ENCODE measurements at regions of chr2 and their contacts with region 1.

Region 1: DNA sequence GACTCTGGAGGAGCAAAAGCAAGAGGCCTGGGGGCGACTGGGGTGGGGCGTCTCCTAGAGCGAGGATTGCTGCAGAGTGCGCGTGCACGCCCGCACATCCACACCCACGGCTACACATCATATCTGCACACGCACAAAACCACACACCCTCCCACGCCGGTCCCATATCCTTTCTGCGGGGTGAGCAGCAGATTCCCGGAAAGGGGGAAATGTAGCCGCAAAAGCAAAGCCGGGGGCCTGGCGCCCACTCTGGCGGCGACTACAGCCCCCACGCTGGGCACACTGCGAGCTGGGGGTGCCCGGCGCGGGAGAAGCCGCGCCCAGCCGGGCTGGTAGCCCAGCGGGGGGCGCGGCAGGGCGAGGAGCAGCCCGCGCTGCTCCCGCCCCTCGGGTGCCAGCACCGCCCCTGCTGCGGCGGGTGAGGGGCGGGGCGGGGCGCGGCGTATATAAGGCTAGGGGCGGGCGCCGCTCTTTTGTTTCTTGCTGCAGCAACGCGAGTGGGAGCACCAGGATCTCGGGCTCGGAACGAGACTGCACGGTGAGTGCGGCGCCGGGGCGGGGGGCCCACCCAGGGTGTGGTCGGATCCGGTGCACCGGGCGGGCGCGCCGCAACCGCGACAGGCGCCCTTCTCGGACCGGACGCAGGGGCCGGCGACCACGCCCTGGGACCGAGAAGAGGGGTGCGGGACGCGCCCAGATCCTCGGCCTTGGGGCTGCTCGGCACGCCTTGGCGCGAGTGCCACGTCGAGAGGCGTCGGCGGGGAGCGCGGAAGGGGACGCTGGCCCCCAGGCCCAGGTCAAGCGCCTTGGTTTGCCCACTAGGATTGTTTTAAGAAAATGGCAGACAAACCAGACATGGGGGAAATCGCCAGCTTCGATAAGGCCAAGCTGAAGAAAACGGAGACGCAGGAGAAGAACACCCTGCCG is at the start of gene TMSB10:
- DNase-seq: peak; percentile 77 to 93 (median 88)
- ATAC-seq: peak; percentile 71 to 82 (median 72)
- H3K4me3 ChIP-seq: peak within 1 kb of the TSS; percentile 88 to 96
- H3K4me3 Mint-ChIP-seq: peak within 1 kb of the TSS; percentile 94 to 96 (median 96)
- H3K27ac ChIP-seq: peak within 1 kb of the TSS; percentile 76
- H3K27ac Mint-ChIP-seq: peak within 1 kb of the TSS; percentile 94 to 95
- H3K4me1 ChIP-seq: peaks cover 26 to 38% of the 10 kb centered on the region in 2 experiments
- H3K4me1 Mint-ChIP-seq: peaks cover 52 to 62% (median 53%) of the 10 kb centered on the region in 3 donors
- H3K27me3 ChIP-seq: no peaks in the 10 kb centered on the region
- H3K27me3 Mint-ChIP-seq: no peaks in the 10 kb centered on the region
- total RNA-seq, gene TMSB10: 1,423 to 1,890 (median 1,689) TPM

Region 2: GRCh38 chr2:84741296-84741765 is 164.1 kb before region 1 on chr2:
- CTCF ChIA-PET with region 1: no interaction called
- POLR2A ChIA-PET with region 1: interaction called in 1 of 2 experiments, 10 read pairs
- DNase-seq: peak; percentile 6 to 69 (median 37)
- ATAC-seq: peak; percentile 92 to 98 (median 96)
- H3K4me3 ChIP-seq: no peak overlapping the region
- H3K4me3 Mint-ChIP-seq: peak overlapping the region in 1 of 3 donors; percentile 20
- H3K27ac ChIP-seq: peak overlapping the region; percentile 51
- H3K27ac Mint-ChIP-seq: peak overlapping the region; percentile 38 to 77
- H3K4me1 ChIP-seq: peaks cover 7 to 19% of the 10 kb centered on the region in 2 experiments
- H3K4me1 Mint-ChIP-seq: peaks cover 22 to 56% (median 32%) of the 10 kb centered on the region in 3 donors
- H3K27me3 ChIP-seq: no peaks in the 10 kb centered on the region
- H3K27me3 Mint-ChIP-seq: no peaks in the 10 kb centered on the region

Region 3: DNA sequence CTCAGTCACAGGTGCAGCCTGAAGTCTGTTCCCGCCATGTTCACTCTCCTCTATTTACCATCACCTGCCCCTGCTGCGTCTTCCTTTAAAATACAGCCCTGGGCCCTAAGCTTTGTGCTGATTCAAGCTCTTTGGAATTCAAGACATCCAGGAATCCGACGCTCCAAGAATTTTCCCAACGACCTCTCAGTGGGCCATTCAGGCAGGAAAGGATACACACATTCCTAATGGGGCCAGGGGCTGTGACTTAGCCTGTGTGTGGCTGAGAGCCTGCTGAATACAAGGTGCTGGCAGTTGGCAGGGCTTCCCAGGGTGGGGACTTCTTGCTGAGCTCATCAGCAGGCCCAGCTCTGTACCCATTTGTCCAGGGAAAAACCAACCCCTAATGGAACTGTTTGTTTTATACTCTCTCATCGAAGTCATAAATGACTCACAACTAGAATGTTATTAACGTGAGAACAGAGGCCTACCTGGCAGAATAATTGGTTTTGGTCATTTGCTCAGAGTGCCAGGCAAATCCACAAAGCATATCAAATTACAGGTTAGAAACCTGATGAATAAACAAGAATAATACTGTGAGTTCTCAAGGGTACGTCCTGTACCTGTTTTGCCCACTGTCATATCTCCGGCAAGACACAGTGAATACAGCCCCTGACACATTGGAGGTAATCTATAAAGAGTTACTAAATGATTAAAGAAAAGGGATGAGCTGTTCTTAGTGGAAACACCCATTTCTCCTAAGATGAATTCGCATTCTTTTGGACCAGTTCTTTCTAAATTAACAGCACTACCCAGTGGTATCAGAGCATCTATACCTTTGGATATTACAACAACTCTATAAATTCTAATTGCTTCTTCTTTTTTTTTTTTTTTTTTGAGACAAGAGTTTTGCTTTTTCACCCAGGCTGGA is 52.9 kb after region 1 on chr2:
- CTCF ChIA-PET with region 1: interaction called, 9 to 10 read pairs
- POLR2A ChIA-PET with region 1: no interaction called
- DNase-seq: no peak
- ATAC-seq: no peak
- H3K4me3 ChIP-seq: no peak overlapping the region
- H3K4me3 Mint-ChIP-seq: no peak overlapping the region
- H3K27ac ChIP-seq: no peak overlapping the region
- H3K27ac Mint-ChIP-seq: peak overlapping the region in 1 of 2 donors; percentile 39
- H3K4me1 ChIP-seq: no peaks in the 10 kb centered on the region
- H3K4me1 Mint-ChIP-seq: peaks cover 6 to 28% (median 14%) of the 10 kb centered on the region in 3 donors
- H3K27me3 ChIP-seq: no peaks in the 10 kb centered on the region
- H3K27me3 Mint-ChIP-seq: no peaks in the 10 kb centered on the region

Region 4: GRCh38 chr2:84970868-84971509 is 65.5 kb after region 1 on chr2 and contains the start of gene KCMF1:
- CTCF ChIA-PET with region 1: no interaction called
- POLR2A ChIA-PET with region 1: interaction called, 4 to 18 read pairs
- DNase-seq: peak in 34 of 35 experiments; percentile 20 to 75 (median 52)
- ATAC-seq: peak; percentile 63 to 67 (median 63)
- H3K4me3 ChIP-seq: peak within 1 kb of the TSS; percentile 95 to 99
- H3K4me3 Mint-ChIP-seq: peak within 1 kb of the TSS; percentile 98 to 99 (median 99)
- H3K27ac ChIP-seq: peak within 1 kb of the TSS; percentile 90
- H3K27ac Mint-ChIP-seq: peak within 1 kb of the TSS; percentile 98 to 99
- H3K4me1 ChIP-seq: peaks cover 26 to 34% of the 10 kb centered on the region in 2 experiments
- H3K4me1 Mint-ChIP-seq: peaks cover 59 to 65% (median 64%) of the 10 kb centered on the region in 3 donors
- H3K27me3 ChIP-seq: no peaks in the 10 kb centered on the region
- H3K27me3 Mint-ChIP-seq: no peaks in the 10 kb centered on the region
- total RNA-seq, gene KCMF1: 56.7 to 62.5 (median 60.3) TPM

Region 5: DNA sequence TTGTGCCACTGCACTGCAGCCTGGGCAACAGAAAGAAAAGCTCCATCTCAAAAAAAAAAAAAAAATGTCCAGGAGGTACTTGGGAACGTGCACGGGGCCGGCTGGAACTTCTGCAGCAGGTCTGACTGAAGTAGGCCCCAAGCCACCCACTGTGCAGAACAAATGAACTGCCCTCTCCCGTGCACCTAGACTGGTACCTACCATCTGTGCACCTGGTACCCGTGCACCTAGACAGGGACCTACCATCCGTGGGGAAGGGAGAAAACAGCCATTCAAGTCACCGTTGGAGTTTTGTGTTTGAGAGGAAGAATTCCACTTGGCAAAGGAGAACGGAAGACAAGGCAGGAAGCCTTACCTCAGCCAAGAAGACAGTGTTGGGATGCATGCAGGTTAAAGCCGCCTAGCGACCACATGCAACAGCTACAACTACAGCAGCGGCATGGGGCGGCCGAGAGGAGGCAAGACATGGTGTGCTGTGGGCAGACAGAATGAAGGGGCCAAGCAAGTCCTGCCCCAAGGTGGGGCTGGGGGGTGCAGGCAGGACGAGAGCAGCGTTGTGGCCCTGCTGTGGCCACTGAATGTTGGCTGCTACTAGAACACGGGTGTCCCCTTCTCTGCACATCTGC is 967.2 kb after region 1 on chr2:
- CTCF ChIA-PET with region 1: interaction called in 1 of 2 experiments, 11 read pairs
- POLR2A ChIA-PET with region 1: no interaction called
- DNase-seq: no peak
- ATAC-seq: no peak
- H3K4me3 ChIP-seq: no peak overlapping the region
- H3K4me3 Mint-ChIP-seq: no peak overlapping the region
- H3K27ac ChIP-seq: no peak overlapping the region
- H3K27ac Mint-ChIP-seq: no peak overlapping the region
- H3K4me1 ChIP-seq: peaks cover 7 to 16% of the 10 kb centered on the region in 2 experiments
- H3K4me1 Mint-ChIP-seq: peaks cover 61 to 72% (median 65%) of the 10 kb centered on the region in 3 donors
- H3K27me3 ChIP-seq: no peaks in the 10 kb centered on the region
- H3K27me3 Mint-ChIP-seq: no peaks in the 10 kb centered on the region

Measured in T-cell (primary cell).